ENCODE measurements at regions of chr19 and their contacts with region 1.

Region 1: GRCh38 chr19:41746593-41747227 is 8.6 kb upstream of the CEACAM6 start:
- DNase-seq: peak; percentile 94
- H3K4me3 ChIP-seq: no peak overlapping the region
- H3K27ac ChIP-seq: peak overlapping the region; percentile 96
- H3K4me1 ChIP-seq: peaks cover 62% of the 10 kb centered on the region
- H3K27me3 ChIP-seq: no peaks in the 10 kb centered on the region
- CTCF ChIP-seq: peak; percentile 87

Region 2: GRCh38 chr19:40139533-40140287 is 1607.0 kb before region 1 on chr19:
- CTCF ChIA-PET with region 1: no interaction called
- POLR2A ChIA-PET with region 1: no interaction called
- intact Hi-C with region 1: loop called (anchors 5 kb)
- DNase-seq: peak; percentile 73
- H3K4me3 ChIP-seq: no peak overlapping the region
- H3K27ac ChIP-seq: no peak overlapping the region
- H3K4me1 ChIP-seq: peaks cover 24% of the 10 kb centered on the region
- H3K27me3 ChIP-seq: no peaks in the 10 kb centered on the region
- CTCF ChIP-seq: peak; percentile 80

Region 3: GRCh38 chr19:41397086-41398049 is 349.3 kb before region 1 on chr19 and contains the starts of genes BCKDHA and EXOSC5:
- CTCF ChIA-PET with region 1: no interaction called
- POLR2A ChIA-PET with region 1: no interaction called
- intact Hi-C with region 1: loop called (anchors 10 kb)
- DNase-seq: peak; percentile 100
- H3K4me3 ChIP-seq: peak within 1 kb of the TSS; percentile 86
- H3K27ac ChIP-seq: peak within 1 kb of the TSS; percentile 97
- H3K4me1 ChIP-seq: peaks cover 10% of the 10 kb centered on the region
- H3K27me3 ChIP-seq: no peaks in the 10 kb centered on the region
- CTCF ChIP-seq: no peak
- total RNA-seq, gene BCKDHA: 14.7 and 15.9 TPM in 2 replicates
- total RNA-seq, gene EXOSC5: 35.0 and 43.1 TPM in 2 replicates

Region 4: GRCh38 chr19:41597600-41598041 is 149.1 kb before region 1 on chr19:
- CTCF ChIA-PET with region 1: no interaction called
- POLR2A ChIA-PET with region 1: no interaction called
- intact Hi-C with region 1: loop called (anchors 2 kb)
- DNase-seq: peak; percentile 85
- H3K4me3 ChIP-seq: no peak overlapping the region
- H3K27ac ChIP-seq: no peak overlapping the region
- H3K4me1 ChIP-seq: no peaks in the 10 kb centered on the region
- H3K27me3 ChIP-seq: no peaks in the 10 kb centered on the region
- CTCF ChIP-seq: peak; percentile 97

Region 5: GRCh38 chr19:41706741-41707501 is 39.8 kb before region 1 on chr19:
- CTCF ChIA-PET with region 1: interaction called, 21 read pairs
- POLR2A ChIA-PET with region 1: no interaction called
- intact Hi-C with region 1: loop called (anchors 1 kb)
- DNase-seq: peak; percentile 77
- H3K4me3 ChIP-seq: no peak overlapping the region
- H3K27ac ChIP-seq: peak overlapping the region; percentile 53
- H3K4me1 ChIP-seq: peaks cover 23% of the 10 kb centered on the region
- H3K27me3 ChIP-seq: no peaks in the 10 kb centered on the region
- CTCF ChIP-seq: peak; percentile 97